Activated CD4-positive, alpha-beta memory T cell treated with anti-CD3 and anti-CD28 coated beads, Interleukin-2, amount 10 ng/mL, durations not matched to agents 7 days and 5 days (primary cell): ENCODE measurements at regions of chr19 and their contacts with region 1.

Region 1: GRCh38 chr19:34974646-34975045 is 10.6 kb upstream of the ZNF792 start:
- DNase-seq: no peak
- H3K4me3 Mint-ChIP-seq: no peak overlapping the region
- H3K27ac Mint-ChIP-seq: no peak overlapping the region
- H3K4me1 Mint-ChIP-seq: peaks cover 15% of the 10 kb centered on the region
- H3K27me3 Mint-ChIP-seq: no peaks in the 10 kb centered on the region

Region 2: DNA sequence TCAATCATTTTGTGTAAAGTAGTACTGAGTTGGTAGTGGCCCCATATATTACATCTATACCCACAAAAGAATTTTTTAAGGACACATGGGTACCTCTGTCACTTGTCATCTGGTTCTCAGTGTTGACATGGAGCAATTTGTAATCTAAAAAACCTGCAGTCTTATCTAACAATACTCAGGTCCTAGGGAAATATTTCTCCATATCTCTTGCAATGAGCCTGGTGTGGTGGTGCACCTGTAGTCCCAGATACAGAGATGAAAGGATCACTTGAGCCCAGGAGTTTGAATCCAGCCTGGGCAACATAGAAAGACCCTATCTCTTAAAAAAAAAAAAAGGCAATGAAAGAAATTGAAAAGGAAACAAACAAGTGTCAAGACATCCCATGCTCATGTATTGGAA is 118.6 kb before region 1 on chr19:
- CTCF ChIA-PET with region 1: no interaction called
- POLR2A ChIA-PET with region 1: no interaction called
- DNase-seq: no peak
- H3K4me3 Mint-ChIP-seq: no peak overlapping the region
- H3K27ac Mint-ChIP-seq: no peak overlapping the region
- H3K4me1 Mint-ChIP-seq: peaks cover 25% of the 10 kb centered on the region
- H3K27me3 Mint-ChIP-seq: no peaks in the 10 kb centered on the region

Region 3: DNA sequence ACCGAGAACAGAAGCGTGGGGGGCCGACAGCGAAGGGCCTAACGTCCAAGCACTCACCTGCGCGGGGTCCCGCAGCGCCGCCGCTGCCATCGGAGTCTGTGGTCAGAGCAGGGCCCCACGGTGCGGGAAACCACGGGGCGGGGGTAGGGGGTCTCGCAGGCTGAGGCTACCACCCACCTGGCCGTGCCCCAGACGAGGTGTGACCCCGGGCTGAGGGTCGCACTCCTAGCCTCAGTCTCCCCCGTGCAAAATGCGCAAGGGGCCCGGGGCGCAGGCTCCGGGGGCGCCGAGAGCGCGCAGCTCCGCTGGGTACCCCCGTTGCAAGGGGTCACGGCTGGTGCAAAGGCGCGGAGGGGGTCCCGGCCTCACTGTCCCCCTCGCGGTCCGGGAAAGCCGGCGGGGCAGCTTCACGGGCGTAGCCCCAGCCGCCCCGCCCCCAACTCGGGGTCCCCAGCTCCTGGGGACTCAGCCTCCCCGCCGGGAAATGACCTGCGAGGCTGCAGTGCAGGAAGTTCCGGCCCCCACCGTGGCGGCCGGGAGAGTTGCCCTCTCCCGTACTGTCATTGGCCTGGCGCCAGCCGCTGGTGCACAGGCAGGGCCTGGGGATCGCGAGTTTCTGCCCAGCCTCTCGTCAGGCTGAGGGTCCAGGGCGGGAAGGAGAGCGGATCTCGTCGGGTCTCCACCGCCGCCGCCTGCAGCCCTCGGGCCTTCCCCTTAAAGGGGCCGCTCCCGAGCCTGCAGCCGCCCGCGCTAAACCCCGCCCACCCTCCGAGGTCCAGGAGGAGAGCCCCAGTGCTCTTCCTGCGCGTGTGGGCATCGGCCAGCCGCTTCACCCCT is 10.9 kb before region 1 on chr19 and contains the start of gene ZNF792:
- CTCF ChIA-PET with region 1: interaction called, 13 read pairs
- POLR2A ChIA-PET with region 1: no interaction called
- DNase-seq: peak; percentile 54
- H3K4me3 Mint-ChIP-seq: peak within 1 kb of the TSS; percentile 93
- H3K27ac Mint-ChIP-seq: peak within 1 kb of the TSS; percentile 79
- H3K4me1 Mint-ChIP-seq: peaks cover 29% of the 10 kb centered on the region
- H3K27me3 Mint-ChIP-seq: no peaks in the 10 kb centered on the region
- total RNA-seq, gene ZNF792: 18.3 to 18.9 TPM

Region 4: GRCh38 chr19:35013031-35013819 is 38.6 kb after region 1 on chr19:
- CTCF ChIA-PET with region 1: interaction called, 57 read pairs
- POLR2A ChIA-PET with region 1: interaction called, 6 read pairs
- DNase-seq: peak; percentile 80
- H3K4me3 Mint-ChIP-seq: no peak overlapping the region
- H3K27ac Mint-ChIP-seq: peak overlapping the region; percentile 57
- H3K4me1 Mint-ChIP-seq: peaks cover 50% of the 10 kb centered on the region
- H3K27me3 Mint-ChIP-seq: no peaks in the 10 kb centered on the region